Activated naive CD4-positive, alpha-beta T cell treated with anti-CD3 and anti-CD28 coated beads for 36 hours (primary cell): ENCODE measurements at regions of chr2 and their contacts with region 1.

Region 1: DNA sequence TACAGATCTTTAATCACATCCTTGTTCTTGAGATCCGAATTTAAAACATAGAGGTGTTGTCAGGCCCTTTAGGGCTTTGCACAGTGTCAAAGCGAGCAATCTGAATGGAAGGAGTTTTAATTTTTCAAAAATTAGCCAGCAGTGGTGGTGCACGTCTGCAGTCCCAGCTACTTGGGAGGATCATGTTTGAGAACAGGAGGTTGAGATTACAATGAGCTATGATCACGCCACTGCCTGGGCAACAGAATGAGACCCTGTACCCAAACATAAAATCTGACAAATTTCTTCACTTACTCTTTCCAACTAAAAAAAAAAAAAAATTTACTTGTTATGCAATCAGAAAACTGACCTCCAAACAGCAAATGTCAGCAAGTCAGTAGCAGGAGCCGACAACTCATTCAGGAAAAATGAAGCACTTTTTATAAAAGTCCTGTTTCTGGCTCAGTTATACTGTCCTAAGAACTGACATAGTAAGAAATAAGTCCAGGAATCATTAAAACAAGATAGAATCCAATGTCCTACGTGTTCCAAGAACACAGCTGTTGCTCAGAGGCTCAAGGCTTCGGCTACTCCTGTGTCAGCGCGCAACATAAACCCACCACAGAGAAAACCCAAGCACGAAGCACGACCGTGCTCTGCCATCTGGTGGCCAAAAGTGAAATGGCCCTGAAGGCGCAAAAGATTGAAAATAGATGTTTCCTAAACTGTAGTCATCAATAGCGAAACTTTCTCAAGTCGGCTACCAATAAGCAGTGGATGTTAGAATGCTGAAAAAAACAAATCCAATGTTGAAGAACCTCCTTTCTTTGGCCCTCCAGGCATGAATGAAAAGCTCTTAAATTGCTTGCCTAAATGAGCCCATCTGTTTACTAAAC is 138.1 kb downstream of the INO80D start:
- DNase-seq: peak; percentile 69
- H3K4me3 Mint-ChIP-seq: no peak overlapping the region
- H3K27ac Mint-ChIP-seq: no peak overlapping the region
- H3K4me1 Mint-ChIP-seq: no peaks in the 10 kb centered on the region
- H3K27me3 Mint-ChIP-seq: peaks cover 6% of the 10 kb centered on the region

Region 2: DNA sequence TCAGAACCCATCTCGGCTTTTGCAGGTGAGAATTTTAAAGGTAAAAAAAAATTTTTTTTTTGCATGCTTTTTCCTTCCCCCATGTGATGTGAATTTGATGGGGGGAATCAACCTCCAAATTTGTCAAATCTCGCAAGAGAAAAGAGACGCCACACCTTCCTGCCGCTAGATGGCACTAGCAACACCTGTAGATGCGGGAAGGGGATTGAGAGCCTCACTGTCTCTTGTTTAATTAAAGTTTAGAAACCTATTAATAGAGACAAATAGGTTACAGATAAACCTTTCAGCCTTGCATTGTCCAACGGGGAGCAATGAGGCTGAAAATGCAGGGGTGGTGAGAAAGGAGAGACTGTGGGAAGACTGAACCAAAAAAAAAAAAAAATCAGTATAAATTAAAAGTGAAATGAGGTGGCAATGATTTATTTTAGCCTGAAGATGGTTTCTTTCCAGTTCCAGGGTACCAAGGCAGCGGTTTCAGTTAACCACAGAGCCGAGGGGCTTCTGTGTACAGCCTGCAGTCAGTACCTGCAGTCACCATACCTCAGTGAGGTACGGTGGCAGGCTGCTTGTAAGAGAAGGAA is 181.0 kb before region 1 on chr2:
- CTCF ChIA-PET with region 1: no interaction called
- intact Hi-C with region 1: loop called (anchors 1 kb)
- DNase-seq: peak; percentile 80
- H3K4me3 Mint-ChIP-seq: no peak overlapping the region
- H3K27ac Mint-ChIP-seq: no peak overlapping the region
- H3K4me1 Mint-ChIP-seq: peaks cover 12% of the 10 kb centered on the region
- H3K27me3 Mint-ChIP-seq: peaks cover 23% of the 10 kb centered on the region

Region 3: GRCh38 chr2:205776139-205776538 is 171.7 kb before region 1 on chr2:
- CTCF ChIA-PET with region 1: interaction called, 10 read pairs
- intact Hi-C with region 1: no loop called
- DNase-seq: peak; percentile 58
- H3K4me3 Mint-ChIP-seq: no peak overlapping the region
- H3K27ac Mint-ChIP-seq: no peak overlapping the region
- H3K4me1 Mint-ChIP-seq: peaks cover 7% of the 10 kb centered on the region
- H3K27me3 Mint-ChIP-seq: peaks cover 32% of the 10 kb centered on the region

Region 4: GRCh38 chr2:205934443-205934842 is 13.4 kb before region 1 on chr2:
- CTCF ChIA-PET with region 1: interaction called, 13 read pairs
- intact Hi-C with region 1: no loop called
- DNase-seq: no peak
- H3K4me3 Mint-ChIP-seq: no peak overlapping the region
- H3K27ac Mint-ChIP-seq: no peak overlapping the region
- H3K4me1 Mint-ChIP-seq: no peaks in the 10 kb centered on the region
- H3K27me3 Mint-ChIP-seq: peaks cover 8% of the 10 kb centered on the region